Activated naive CD4-positive, alpha-beta T cell treated with anti-CD3 and anti-CD28 coated beads for 36 hours (primary cell): ENCODE measurements at regions of chr12 and their contacts with region 1.

Region 1: DNA sequence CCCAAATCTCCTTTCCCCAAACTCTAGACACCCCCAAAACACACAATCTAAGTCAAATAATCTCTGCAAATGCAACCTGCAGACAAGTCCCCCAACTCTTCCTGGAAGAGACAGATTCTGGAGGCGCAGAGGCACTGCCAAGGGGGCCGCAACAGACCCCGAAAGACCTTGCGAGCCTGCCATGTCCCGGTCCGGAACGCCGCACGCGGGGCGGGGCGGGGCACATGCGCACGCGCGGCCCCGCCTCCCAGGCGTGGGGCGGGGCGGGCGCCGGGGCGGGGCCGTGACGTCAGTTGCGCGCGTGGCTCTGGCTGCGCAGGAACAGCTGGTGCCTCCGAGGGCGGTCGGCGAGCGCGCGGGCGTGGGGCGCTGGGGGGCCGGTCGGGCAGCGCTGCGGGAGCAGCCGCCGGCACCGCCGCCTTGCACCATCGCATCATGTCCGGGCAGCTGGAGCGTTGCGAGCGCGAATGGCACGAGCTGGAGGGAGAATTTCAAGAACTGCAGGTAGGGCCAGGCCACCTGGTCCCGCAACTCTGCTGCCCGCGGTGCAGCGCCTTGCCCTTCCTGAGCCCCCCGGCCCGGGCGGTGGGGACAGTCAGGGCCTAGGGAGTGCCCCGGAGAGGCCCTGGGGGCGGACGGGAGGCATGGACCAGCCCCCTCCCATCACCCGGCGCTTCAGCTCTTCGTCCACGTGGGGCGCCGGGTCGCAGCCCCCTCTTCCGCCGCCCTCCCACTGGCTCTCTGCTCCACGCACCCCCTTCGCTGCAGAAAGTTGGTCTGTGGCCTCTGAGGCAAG is at the start of gene TMEM120B:
- DNase-seq: peak; percentile 77
- H3K4me3 Mint-ChIP-seq: peak within 1 kb of the TSS; percentile 87
- H3K27ac Mint-ChIP-seq: peak within 1 kb of the TSS; percentile 77
- H3K4me1 Mint-ChIP-seq: peaks cover 19% of the 10 kb centered on the region
- H3K27me3 Mint-ChIP-seq: no peaks in the 10 kb centered on the region
- total RNA-seq, gene TMEM120B: 5.5 to 6.3 TPM

Region 2: GRCh38 chr12:121697098-121697698 is 15.5 kb before region 1 on chr12:
- CTCF ChIA-PET with region 1: interaction called, 9 read pairs
- intact Hi-C with region 1: loop called (anchors 1 kb)
- DNase-seq: peak; percentile 38
- H3K4me3 Mint-ChIP-seq: no peak overlapping the region
- H3K27ac Mint-ChIP-seq: no peak overlapping the region
- H3K4me1 Mint-ChIP-seq: peaks cover 2% of the 10 kb centered on the region
- H3K27me3 Mint-ChIP-seq: no peaks in the 10 kb centered on the region